CD8-positive, alpha-beta T cell (primary cell): ENCODE measurements at regions of chr17 and their contacts with region 1.

Region 1: GRCh38 chr17:17591355-17592298 is at the start of gene PEMT:
- DNase-seq: peak; percentile 81 to 98 (median 92)
- ATAC-seq: peak; percentile 90
- H3K4me3 ChIP-seq: peak within 1 kb of the TSS; percentile 72 to 88
- H3K4me3 Mint-ChIP-seq: peak within 1 kb of the TSS; percentile 94
- H3K27ac ChIP-seq: peak within 1 kb of the TSS; percentile 80 to 86
- H3K27ac Mint-ChIP-seq: peak within 1 kb of the TSS; percentile 95
- H3K4me1 ChIP-seq: peaks cover 20% of the 10 kb centered on the region
- H3K4me1 Mint-ChIP-seq: peaks cover 19% of the 10 kb centered on the region
- H3K27me3 ChIP-seq: no peaks in the 10 kb centered on the region
- H3K27me3 Mint-ChIP-seq: no peaks in the 10 kb centered on the region
- CTCF ChIP-seq: no peak
- total RNA-seq, gene PEMT: 14.7 to 15.4 TPM

Region 2: GRCh38 chr17:17041571-17042380 is 549.9 kb before region 1 on chr17:
- CTCF ChIA-PET with region 1: no interaction called
- POLR2A ChIA-PET with region 1: no interaction called
- intact Hi-C with region 1: loop called in 1 of 2 experiments (anchors 2 kb)
- DNase-seq: peak; percentile 93 to 99 (median 98)
- ATAC-seq: peak; percentile 97
- H3K4me3 ChIP-seq: peak overlapping the region; percentile 51 to 70
- H3K4me3 Mint-ChIP-seq: peak overlapping the region; percentile 70
- H3K27ac ChIP-seq: peak overlapping the region in 1 of 2 experiments; percentile 40
- H3K27ac Mint-ChIP-seq: peak overlapping the region; percentile 28
- H3K4me1 ChIP-seq: peaks cover 35% of the 10 kb centered on the region
- H3K4me1 Mint-ChIP-seq: peaks cover 44% of the 10 kb centered on the region
- H3K27me3 ChIP-seq: no peaks in the 10 kb centered on the region
- H3K27me3 Mint-ChIP-seq: no peaks in the 10 kb centered on the region
- CTCF ChIP-seq: no peak

Region 3: DNA sequence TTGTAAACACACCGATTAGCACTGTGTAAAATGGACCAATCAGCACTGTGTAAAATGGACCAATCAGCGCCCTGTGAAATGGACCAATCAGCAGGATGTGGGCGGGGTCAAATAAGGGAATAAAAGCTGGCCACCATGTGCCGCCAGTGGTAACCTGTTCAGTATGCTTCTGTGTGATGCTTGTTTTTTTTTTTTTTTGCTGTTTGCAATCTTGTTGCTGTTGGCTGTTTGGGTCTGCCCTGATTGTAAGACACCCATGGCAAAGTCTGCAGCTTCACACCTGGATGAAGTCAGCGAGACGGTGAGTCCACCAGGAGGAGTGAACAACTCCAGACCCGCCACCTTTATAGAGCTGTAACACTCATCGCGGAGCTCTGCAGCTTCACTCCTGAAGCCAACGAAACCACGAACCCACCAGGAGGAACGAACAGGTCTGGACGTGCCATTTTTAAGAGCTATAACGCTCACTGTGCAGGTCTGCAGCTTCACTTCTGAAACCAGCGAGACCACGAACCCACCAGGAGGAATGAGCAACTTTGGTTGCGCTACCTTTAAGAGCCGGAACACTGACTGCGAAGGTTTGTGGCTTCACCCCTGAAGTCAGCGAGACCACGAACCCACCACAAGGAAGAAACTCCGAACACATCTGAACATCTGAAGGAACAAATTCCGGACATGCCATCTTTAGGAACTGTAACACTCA is 199.8 kb before region 1 on chr17:
- CTCF ChIA-PET with region 1: no interaction called
- POLR2A ChIA-PET with region 1: interaction called, 4 read pairs
- intact Hi-C with region 1: loop called in 1 of 2 experiments (anchors 5 kb)
- DNase-seq: peak; percentile 37 to 87 (median 62)
- ATAC-seq: peak; percentile 82
- H3K4me3 ChIP-seq: peak overlapping the region; percentile 47 to 49
- H3K4me3 Mint-ChIP-seq: peak overlapping the region; percentile 83
- H3K27ac ChIP-seq: peak overlapping the region; percentile 34 to 41
- H3K27ac Mint-ChIP-seq: peak overlapping the region; percentile 88
- H3K4me1 ChIP-seq: peaks cover 24% of the 10 kb centered on the region
- H3K4me1 Mint-ChIP-seq: peaks cover 25% of the 10 kb centered on the region
- H3K27me3 ChIP-seq: no peaks in the 10 kb centered on the region
- H3K27me3 Mint-ChIP-seq: peaks cover 2% of the 10 kb centered on the region
- CTCF ChIP-seq: no peak

Region 4: DNA sequence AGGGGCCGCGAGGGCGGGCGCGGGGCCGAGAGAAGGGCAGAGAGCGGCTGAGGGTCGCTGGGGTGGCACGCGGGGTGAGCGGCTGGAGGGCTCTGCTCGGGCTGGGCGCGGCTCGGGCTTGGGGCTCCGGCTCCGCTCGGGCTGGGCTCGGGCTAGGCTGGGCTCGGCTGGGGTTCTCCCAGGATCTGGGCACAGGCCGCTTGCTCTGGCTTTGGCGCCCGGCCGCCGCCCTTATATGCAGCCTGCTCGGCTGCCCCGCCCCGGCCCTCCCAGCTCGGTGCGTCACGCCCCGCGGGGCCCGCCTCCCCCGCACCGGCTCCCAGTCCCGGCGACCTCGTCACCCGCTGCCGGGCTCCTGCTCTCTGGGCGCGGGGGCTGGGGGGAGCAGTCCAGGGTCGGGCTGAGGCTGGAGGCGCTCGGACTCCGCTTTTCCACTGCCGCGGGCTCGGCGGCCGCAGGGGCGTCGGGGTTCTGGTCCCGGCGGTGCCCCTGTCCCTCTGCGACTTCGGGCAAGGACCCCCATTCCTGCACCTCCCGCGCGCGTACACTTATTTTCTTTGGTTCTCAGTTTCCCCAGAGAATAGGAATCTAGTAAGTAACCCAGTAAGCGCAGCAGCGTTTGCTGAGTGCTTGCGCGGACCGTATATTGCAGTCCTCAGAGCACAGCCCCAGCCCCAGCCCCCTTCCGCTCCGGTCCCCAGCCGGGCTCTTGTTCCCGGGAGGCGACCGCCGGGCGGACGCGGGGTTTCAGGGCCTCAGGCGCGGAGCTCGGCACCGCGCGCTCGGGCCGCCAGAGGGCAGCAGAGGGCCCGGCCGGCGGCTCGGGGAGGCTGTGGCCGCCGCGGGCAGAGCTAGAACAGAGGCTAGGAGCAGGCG is 95.2 kb before region 1 on chr17 and contains the start of gene RASD1:
- CTCF ChIA-PET with region 1: interaction called, 6 read pairs
- POLR2A ChIA-PET with region 1: interaction called, 10 read pairs
- intact Hi-C with region 1: loop called (anchors 1 to 5 kb)
- DNase-seq: peak; percentile 62 to 88 (median 75)
- ATAC-seq: peak; percentile 85
- H3K4me3 ChIP-seq: peak within 1 kb of the TSS; percentile 51 to 76
- H3K4me3 Mint-ChIP-seq: peak within 1 kb of the TSS; percentile 84
- H3K27ac ChIP-seq: no peak within 1 kb of the TSS
- H3K27ac Mint-ChIP-seq: no peak within 1 kb of the TSS
- H3K4me1 ChIP-seq: peaks cover 13% of the 10 kb centered on the region
- H3K4me1 Mint-ChIP-seq: peaks cover 16% of the 10 kb centered on the region
- H3K27me3 ChIP-seq: peaks cover 0 to 8% of the 10 kb centered on the region in 2 experiments
- H3K27me3 Mint-ChIP-seq: peaks cover 10% of the 10 kb centered on the region
- CTCF ChIP-seq: peak; percentile 95
- total RNA-seq, gene RASD1: 2.8 to 2.9 TPM

Region 5: GRCh38 chr17:17694169-17695081 is 102.8 kb after region 1 on chr17:
- CTCF ChIA-PET with region 1: no interaction called
- POLR2A ChIA-PET with region 1: no interaction called
- intact Hi-C with region 1: loop called in 1 of 2 experiments (anchors 5 kb)
- DNase-seq: peak; percentile 25 to 87 (median 76)
- ATAC-seq: peak; percentile 72
- H3K4me3 ChIP-seq: peak overlapping the region; percentile 83 to 91
- H3K4me3 Mint-ChIP-seq: peak overlapping the region; percentile 86
- H3K27ac ChIP-seq: peak overlapping the region; percentile 88 to 97
- H3K27ac Mint-ChIP-seq: peak overlapping the region; percentile 99
- H3K4me1 ChIP-seq: peaks cover 52% of the 10 kb centered on the region
- H3K4me1 Mint-ChIP-seq: peaks cover 68% of the 10 kb centered on the region
- H3K27me3 ChIP-seq: no peaks in the 10 kb centered on the region
- H3K27me3 Mint-ChIP-seq: no peaks in the 10 kb centered on the region
- CTCF ChIP-seq: no peak

Region 6: DNA sequence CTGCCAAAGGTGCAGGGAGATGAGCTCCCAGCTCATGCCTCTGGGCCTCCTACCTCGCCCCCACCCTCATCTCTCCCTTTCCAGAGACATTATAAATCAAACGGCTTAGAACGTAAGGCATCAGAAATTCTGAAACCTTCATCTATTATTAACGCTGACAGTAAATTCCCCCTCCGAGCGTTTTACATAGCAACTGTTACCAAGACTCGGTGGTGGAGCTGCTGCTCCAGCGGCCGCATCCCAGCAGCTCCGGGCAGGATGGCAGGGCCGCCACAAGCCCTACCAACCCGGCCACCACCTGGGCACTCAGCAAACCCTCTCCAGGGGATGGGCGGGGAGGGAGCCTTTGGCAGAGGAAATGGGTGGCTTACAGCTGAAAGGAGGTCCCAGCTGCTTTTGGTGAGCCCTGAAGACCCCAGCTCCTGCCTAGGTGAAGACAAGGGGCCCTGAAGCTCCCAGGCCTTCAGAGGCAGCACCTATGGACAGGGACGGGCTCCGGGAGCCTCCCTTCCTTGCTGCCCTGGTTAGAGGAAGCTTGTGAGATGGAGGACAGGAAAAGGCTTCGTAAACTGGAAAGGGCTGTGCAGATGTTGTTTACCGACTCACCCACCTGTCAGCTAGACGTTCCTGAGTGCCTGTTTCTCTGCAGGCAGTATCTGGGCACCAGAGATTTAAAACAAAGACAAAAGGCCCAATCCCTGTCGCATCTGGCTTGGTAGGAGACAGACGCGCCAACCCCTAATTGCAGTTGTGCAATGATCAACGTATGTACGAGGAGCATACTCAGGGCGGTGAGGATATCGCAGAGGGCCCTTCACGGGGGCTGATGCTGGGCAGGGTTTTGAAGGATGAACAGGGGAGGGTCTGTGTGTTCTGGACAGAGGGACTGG is 166.6 kb after region 1 on chr17:
- CTCF ChIA-PET with region 1: no interaction called
- POLR2A ChIA-PET with region 1: no interaction called
- intact Hi-C with region 1: no loop called
- DNase-seq: peak in 2 of 9 experiments; percentile 10 to 52
- ATAC-seq: peak; percentile 12
- H3K4me3 ChIP-seq: peak overlapping the region in 1 of 2 experiments; percentile 44
- H3K4me3 Mint-ChIP-seq: peak overlapping the region; percentile 77
- H3K27ac ChIP-seq: peak overlapping the region; percentile 54 to 66
- H3K27ac Mint-ChIP-seq: peak overlapping the region; percentile 94
- H3K4me1 ChIP-seq: peaks cover 58% of the 10 kb centered on the region
- H3K4me1 Mint-ChIP-seq: peaks cover 67% of the 10 kb centered on the region
- H3K27me3 ChIP-seq: no peaks in the 10 kb centered on the region
- H3K27me3 Mint-ChIP-seq: no peaks in the 10 kb centered on the region
- CTCF ChIP-seq: no peak

Region 7: GRCh38 chr17:18087610-18088491 is 496.2 kb after region 1 on chr17 and contains the start of gene DRG2:
- CTCF ChIA-PET with region 1: no interaction called
- POLR2A ChIA-PET with region 1: no interaction called
- intact Hi-C with region 1: loop called in 1 of 2 experiments (anchors 5 kb)
- DNase-seq: peak; percentile 79 to 94 (median 88)
- ATAC-seq: peak; percentile 91
- H3K4me3 ChIP-seq: peak within 1 kb of the TSS; percentile 80 to 90
- H3K4me3 Mint-ChIP-seq: peak within 1 kb of the TSS; percentile 99
- H3K27ac ChIP-seq: peak within 1 kb of the TSS; percentile 78 to 87
- H3K27ac Mint-ChIP-seq: peak within 1 kb of the TSS; percentile 98
- H3K4me1 ChIP-seq: peaks cover 15% of the 10 kb centered on the region
- H3K4me1 Mint-ChIP-seq: peaks cover 33% of the 10 kb centered on the region
- H3K27me3 ChIP-seq: no peaks in the 10 kb centered on the region
- H3K27me3 Mint-ChIP-seq: no peaks in the 10 kb centered on the region
- CTCF ChIP-seq: no peak
- total RNA-seq, gene DRG2: 45.4 to 46.3 TPM